ENCODE measurements at regions of chr3 and their contacts with region 1.

Region 1: DNA sequence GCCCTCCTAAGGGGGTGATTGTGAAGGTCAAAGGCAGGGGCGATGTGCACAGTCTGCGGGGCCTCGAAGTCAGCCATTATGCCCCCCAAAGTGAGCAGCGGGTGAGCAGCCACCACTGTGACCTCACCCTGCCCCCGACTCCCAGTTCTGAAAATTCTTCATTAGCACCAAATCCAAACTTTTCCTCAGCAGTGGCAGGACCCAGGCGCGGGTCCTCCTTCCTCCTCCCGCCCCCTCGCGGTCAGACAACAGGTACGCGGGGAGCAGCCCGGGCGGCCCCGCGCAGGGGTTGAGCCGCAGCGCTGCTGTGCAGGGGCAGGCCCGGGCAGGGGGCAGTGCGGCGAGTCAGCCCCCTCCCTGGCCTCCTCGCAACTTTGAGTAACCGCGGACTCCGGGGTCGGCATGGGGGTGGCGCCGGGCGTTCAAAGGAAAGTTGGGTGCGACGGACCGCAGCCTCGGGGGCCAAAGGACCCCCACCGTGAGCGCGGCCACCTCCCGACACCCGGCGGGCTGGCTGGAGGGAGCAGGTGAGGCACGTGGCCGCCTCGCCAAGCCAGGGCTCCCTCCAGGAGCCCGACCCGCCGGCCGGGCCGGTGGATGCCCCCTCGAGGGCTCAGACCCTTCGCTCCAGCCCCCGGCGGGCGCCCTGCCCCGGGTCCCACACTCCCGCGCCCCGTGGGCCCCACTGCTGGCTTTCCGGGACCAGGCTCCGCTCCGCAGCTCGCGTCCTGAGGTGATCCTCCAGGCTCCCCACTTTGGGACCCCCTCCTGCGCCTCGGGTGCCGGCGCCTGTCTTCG is 49.4 kb upstream of the CCDC174 start:
- DNase-seq: no peak

Region 2: DNA sequence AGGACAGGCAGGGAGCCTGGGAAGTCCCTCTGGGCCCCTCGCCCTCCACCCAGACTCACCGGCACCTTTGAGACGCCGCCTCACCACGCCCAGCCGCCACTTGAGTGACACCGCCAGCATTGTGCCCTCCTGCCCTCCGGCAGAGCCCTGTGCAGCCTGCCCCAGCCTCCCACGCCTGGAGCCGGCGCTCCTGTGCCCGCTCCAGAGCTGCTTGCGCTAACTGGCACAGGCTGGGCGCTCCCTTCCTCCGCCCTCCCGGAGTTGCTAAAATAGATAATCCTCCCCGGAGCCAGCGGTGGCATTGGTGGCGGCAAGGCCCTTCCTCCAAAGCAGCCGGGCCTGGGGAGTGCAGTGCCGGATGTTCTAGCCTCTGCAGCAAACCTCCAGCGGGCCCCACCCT is 46.4 kb before region 1 on chr3:
- intact Hi-C with region 1: loop called (anchors 5 kb)
- DNase-seq: peak; percentile 84

Region 3: GRCh38 chr3:14660907-14661306 is 58.7 kb after region 1 on chr3:
- intact Hi-C with region 1: no loop called
- DNase-seq: no peak

Region 4: DNA sequence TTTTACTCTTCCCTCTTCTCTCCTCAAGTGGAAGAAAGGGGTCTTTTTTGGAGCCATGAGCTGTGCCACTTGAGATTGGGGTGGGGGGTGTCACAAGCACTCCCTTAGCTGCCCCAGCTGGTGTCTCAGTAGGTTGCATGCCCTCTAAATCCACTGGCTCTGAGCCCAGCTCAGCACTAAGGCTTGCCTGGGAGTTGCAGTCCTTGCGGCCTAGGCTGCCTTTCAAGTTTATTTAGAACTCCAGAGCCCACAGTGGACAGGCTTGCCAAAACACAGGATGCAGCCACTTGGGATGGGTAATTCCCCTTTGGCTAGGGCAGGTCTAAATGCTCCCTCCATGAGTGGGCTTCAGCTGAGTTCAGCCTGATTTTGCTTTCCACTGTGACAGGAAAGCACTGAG is 97.4 kb after region 1 on chr3:
- intact Hi-C with region 1: no loop called
- DNase-seq: no peak

Measured in cardiac septum (tissue), 1 donor.